CD4-positive, alpha-beta memory T cell (primary cell): ENCODE measurements at regions of chr7 and their contacts with region 1.

Region 1: DNA sequence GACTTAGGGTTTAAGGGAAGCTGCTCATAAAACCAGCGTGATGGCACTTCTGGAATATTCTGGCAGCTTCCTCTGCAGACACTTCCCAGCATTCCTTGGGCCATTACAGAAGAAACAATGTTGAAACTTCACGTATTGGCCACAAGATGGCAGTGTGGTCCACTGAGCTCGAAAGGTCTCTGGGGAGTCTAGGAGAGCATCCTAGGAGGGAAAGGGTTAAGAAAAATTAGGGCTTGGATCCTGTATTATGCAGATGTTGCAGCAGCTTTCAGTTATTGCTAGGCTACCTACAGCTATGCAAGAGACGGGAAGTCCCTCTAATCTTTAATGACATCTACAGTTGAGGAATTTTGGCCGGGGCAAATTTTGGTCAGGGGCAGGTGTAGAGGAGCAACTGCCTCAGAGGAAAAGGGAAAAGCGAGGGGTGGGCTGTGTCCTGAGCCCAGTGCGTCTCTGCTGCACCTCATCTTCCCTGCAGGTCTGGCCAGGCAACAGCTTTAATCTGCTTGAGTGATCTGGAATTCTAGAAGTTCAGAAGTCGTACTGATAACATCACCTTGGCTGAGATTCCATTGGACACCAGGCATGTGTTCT is 220.7 kb upstream of the PRSS58 start:
- DNase-seq: peak in 3 of 5 donors; percentile 23 to 31 (median 26)
- H3K4me3 ChIP-seq: no peak overlapping the region
- H3K4me3 Mint-ChIP-seq: peak overlapping the region in 7 of 8 donors; percentile 8 to 82 (median 68)
- H3K27ac ChIP-seq: no peak overlapping the region
- H3K27ac Mint-ChIP-seq: peak overlapping the region; percentile 48 to 90 (median 76)
- H3K4me1 ChIP-seq: peaks cover 82% of the 10 kb centered on the region
- H3K4me1 Mint-ChIP-seq: peaks cover 63 to 86% (median 80%) of the 10 kb centered on the region in 4 donors
- H3K27me3 ChIP-seq: no peaks in the 10 kb centered on the region
- H3K27me3 Mint-ChIP-seq: no peaks in the 10 kb centered on the region

Region 2: DNA sequence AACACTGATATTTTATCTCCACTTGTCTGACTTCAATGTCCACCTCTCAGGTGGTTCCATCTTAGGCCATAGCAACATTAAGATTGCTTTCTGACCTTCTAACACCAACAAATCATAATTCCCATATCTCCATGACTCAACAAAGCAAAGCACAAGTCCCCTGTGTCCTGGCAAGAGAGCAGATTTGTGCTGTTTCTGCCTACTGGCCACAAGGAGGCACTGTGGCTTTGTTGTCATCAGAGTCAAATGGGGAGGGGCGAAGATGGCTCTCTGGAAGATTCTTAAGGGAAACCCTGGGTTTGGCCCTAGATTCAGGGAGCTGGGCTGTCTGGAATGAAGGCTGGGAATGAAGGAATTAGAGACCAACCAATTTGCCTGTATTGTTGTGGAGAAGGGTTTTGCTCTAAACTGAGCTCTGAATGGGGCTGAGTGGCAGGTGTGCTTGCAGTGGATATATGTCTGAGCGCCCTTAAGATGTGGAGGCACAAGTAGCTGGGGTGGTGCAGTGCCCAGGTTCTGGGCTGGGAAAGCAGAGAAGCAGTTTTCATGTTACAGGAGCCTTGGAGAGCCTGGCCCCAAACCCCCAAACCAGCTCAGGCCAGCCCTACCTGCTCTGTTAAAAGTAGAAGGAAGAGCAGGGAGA is 65.9 kb before region 1 on chr7:
- CTCF ChIA-PET with region 1: interaction called, 13 read pairs
- POLR2A ChIA-PET with region 1: interaction called, 3 read pairs
- intact Hi-C with region 1: loop called (anchors 1 kb)
- DNase-seq: peak; percentile 38 to 48 (median 41)
- H3K4me3 ChIP-seq: no peak overlapping the region
- H3K4me3 Mint-ChIP-seq: peak overlapping the region in 4 of 8 donors; percentile 8 to 36 (median 24)
- H3K27ac ChIP-seq: no peak overlapping the region
- H3K27ac Mint-ChIP-seq: peak overlapping the region in 4 of 7 donors; percentile 18 to 74 (median 28)
- H3K4me1 ChIP-seq: no peaks in the 10 kb centered on the region
- H3K4me1 Mint-ChIP-seq: peaks cover 1 to 6% (median 3%) of the 10 kb centered on the region in 4 donors
- H3K27me3 ChIP-seq: no peaks in the 10 kb centered on the region
- H3K27me3 Mint-ChIP-seq: no peaks in the 10 kb centered on the region

Region 3: GRCh38 chr7:142438235-142438922 is 40.2 kb before region 1 on chr7:
- CTCF ChIA-PET with region 1: interaction called, 128 read pairs
- POLR2A ChIA-PET with region 1: interaction called, 3 read pairs
- intact Hi-C with region 1: loop called (anchors 5 kb)
- DNase-seq: peak in 4 of 5 donors; percentile 15 to 33 (median 26)
- H3K4me3 ChIP-seq: no peak overlapping the region
- H3K4me3 Mint-ChIP-seq: peak overlapping the region in 4 of 8 donors; percentile 0 to 58 (median 40)
- H3K27ac ChIP-seq: no peak overlapping the region
- H3K27ac Mint-ChIP-seq: peak overlapping the region in 2 of 7 donors; percentile 13 to 49
- H3K4me1 ChIP-seq: peaks cover 47% of the 10 kb centered on the region
- H3K4me1 Mint-ChIP-seq: peaks cover 38 to 71% (median 55%) of the 10 kb centered on the region in 4 donors
- H3K27me3 ChIP-seq: no peaks in the 10 kb centered on the region
- H3K27me3 Mint-ChIP-seq: no peaks in the 10 kb centered on the region

Region 4: DNA sequence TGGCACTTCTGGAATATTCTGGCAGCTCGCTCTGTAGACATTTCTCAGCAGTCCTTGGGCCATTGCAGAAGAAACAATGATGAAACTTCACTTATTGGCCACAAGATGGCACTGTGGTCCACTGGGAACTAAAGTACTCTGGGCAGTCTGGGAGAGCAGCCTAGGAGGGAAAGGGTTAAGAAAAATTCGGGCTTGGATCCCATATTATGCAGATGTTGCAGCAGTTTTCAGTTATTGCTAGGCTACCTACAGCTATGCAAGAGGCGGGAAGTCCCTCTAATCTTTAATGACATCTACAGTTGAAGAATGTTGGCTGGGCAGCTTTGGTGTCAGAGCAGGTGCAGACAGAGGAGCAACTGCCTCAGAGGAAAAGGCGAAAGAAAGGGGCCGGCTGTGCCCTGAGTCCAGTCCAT is 19.0 kb before region 1 on chr7:
- CTCF ChIA-PET with region 1: interaction called, 775 read pairs
- POLR2A ChIA-PET with region 1: interaction called, 29 read pairs
- intact Hi-C with region 1: loop called (anchors 1 kb)
- DNase-seq: peak in 4 of 5 donors; percentile 30 to 39 (median 34)
- H3K4me3 ChIP-seq: no peak overlapping the region
- H3K4me3 Mint-ChIP-seq: peak overlapping the region in 7 of 8 donors; percentile 2 to 69 (median 29)
- H3K27ac ChIP-seq: no peak overlapping the region
- H3K27ac Mint-ChIP-seq: peak overlapping the region in 6 of 7 donors; percentile 34 to 83 (median 58)
- H3K4me1 ChIP-seq: peaks cover 46% of the 10 kb centered on the region
- H3K4me1 Mint-ChIP-seq: peaks cover 35 to 68% (median 53%) of the 10 kb centered on the region in 4 donors
- H3K27me3 ChIP-seq: no peaks in the 10 kb centered on the region
- H3K27me3 Mint-ChIP-seq: no peaks in the 10 kb centered on the region

Region 5: DNA sequence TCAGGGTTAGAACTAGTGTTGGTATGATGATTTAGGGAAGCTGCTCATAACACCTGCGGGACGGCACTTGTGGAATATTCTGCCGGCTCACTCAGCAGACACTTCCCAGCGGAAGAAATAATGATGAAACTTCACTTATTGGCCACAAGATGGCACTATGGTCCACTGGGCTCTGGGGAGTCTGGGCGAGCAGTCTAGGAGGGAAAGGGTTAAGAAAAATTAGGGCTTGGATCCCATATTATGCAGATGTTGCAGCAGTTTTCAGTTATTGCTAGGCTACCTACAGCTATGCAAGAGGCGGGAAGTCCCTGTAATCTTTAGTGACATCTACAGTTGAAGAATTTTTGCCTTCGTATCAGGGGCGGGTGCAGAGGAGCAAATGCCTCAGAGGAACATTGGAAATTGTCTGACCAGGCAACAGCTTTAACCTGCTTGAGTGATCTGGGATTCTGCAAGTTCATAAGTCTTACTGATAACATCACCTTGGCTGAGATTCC is 18.0 kb after region 1 on chr7:
- CTCF ChIA-PET with region 1: interaction called, 775 read pairs
- POLR2A ChIA-PET with region 1: interaction called, 9 read pairs
- intact Hi-C with region 1: no loop called
- DNase-seq: peak; percentile 33 to 46 (median 36)
- H3K4me3 ChIP-seq: no peak overlapping the region
- H3K4me3 Mint-ChIP-seq: peak overlapping the region; percentile 40 to 75 (median 66)
- H3K27ac ChIP-seq: no peak overlapping the region
- H3K27ac Mint-ChIP-seq: peak overlapping the region; percentile 39 to 86 (median 74)
- H3K4me1 ChIP-seq: peaks cover 30% of the 10 kb centered on the region
- H3K4me1 Mint-ChIP-seq: peaks cover 24 to 51% (median 30%) of the 10 kb centered on the region in 4 donors
- H3K27me3 ChIP-seq: no peaks in the 10 kb centered on the region
- H3K27me3 Mint-ChIP-seq: no peaks in the 10 kb centered on the region

Region 6: GRCh38 chr7:142508258-142508689 is 29.7 kb after region 1 on chr7:
- CTCF ChIA-PET with region 1: interaction called, 15 read pairs
- POLR2A ChIA-PET with region 1: interaction called, 3 read pairs
- intact Hi-C with region 1: no loop called
- DNase-seq: peak; percentile 15 to 62 (median 19)
- H3K4me3 ChIP-seq: no peak overlapping the region
- H3K4me3 Mint-ChIP-seq: peak overlapping the region in 7 of 8 donors; percentile 4 to 65 (median 51)
- H3K27ac ChIP-seq: no peak overlapping the region
- H3K27ac Mint-ChIP-seq: peak overlapping the region; percentile 50 to 94 (median 83)
- H3K4me1 ChIP-seq: peaks cover 31% of the 10 kb centered on the region
- H3K4me1 Mint-ChIP-seq: peaks cover 10 to 44% (median 27%) of the 10 kb centered on the region in 4 donors
- H3K27me3 ChIP-seq: no peaks in the 10 kb centered on the region
- H3K27me3 Mint-ChIP-seq: no peaks in the 10 kb centered on the region

Region 7: DNA sequence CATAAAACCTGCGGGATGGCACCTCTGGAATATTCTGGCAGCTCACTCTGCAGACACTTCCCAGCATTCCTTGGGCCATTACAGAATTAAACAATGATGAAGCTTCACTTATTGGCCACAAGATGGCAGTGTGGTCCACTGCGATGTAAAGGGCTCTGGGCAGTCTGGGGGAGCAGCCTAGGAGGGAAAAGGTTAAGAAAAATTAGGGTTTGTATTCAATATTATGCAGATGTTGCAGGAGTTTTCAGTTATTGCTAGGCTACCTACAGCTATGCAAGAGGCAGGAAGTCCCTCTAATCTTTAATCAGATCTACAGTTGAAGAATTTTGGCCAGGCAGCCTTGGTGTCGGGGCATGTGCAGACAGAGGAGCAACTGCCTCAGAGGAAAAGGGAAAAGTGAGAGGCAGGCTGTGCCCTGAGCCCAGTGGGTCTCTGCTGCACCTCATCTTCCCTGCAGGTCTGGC is 37.5 kb after region 1 on chr7:
- CTCF ChIA-PET with region 1: interaction called, 12 read pairs
- POLR2A ChIA-PET with region 1: interaction called, 7 read pairs
- intact Hi-C with region 1: no loop called
- DNase-seq: peak in 4 of 5 donors; percentile 33 to 46 (median 44)
- H3K4me3 ChIP-seq: no peak overlapping the region
- H3K4me3 Mint-ChIP-seq: peak overlapping the region in 4 of 8 donors; percentile 18 to 75 (median 30)
- H3K27ac ChIP-seq: no peak overlapping the region
- H3K27ac Mint-ChIP-seq: peak overlapping the region in 3 of 7 donors; percentile 9 to 67 (median 57)
- H3K4me1 ChIP-seq: peaks cover 34% of the 10 kb centered on the region
- H3K4me1 Mint-ChIP-seq: peaks cover 12 to 50% (median 29%) of the 10 kb centered on the region in 4 donors
- H3K27me3 ChIP-seq: no peaks in the 10 kb centered on the region
- H3K27me3 Mint-ChIP-seq: no peaks in the 10 kb centered on the region